KBM-7 (cell line): ENCODE measurements at regions of chr15 and their contacts with region 1.

Region 1: GRCh38 chr15:89177633-89178306 is 43.6 kb downstream of the RLBP1 start:
- DNase-seq: peak; percentile 87

Region 2: DNA sequence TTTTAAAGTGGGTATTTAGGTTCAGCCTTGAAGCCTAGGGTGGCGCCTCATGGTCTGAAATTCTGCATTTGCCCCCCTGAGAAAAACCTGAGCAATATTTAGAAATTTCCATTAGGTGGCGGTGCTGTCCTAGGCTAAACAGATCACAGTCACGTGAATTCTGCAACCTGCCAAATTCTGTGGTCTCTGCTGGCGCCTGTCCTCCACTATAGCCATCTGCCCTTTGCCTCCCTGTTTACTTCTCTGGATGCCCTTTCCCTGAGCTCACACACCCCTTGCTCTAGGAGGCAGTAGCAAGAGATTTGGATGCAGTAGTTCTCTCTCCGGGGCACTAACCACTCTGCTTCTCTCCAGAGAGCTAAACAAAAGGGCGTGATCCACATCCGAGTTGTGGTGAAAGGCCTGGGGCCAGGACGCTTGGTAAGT is 701.1 kb before region 1 on chr15:
- in situ Hi-C with region 1: loop called (anchors 25 kb)
- DNase-seq: peak; percentile 80

Region 3: GRCh38 chr15:89057504-89058133 is 120.2 kb before region 1 on chr15:
- in situ Hi-C with region 1: loop called (anchors 10 kb)
- DNase-seq: peak; percentile 97